ENCODE measurements at regions of chr6 and their contacts with region 1.

Region 1: GRCh38 chr6:47309291-47310130 is at the start of gene TNFRSF21:
- DNase-seq: peak; percentile 95
- H3K4me3 Mint-ChIP-seq: peak within 1 kb of the TSS; percentile 64
- H3K27ac Mint-ChIP-seq: peak within 1 kb of the TSS; percentile 58
- H3K4me1 Mint-ChIP-seq: peaks cover 9% of the 10 kb centered on the region
- H3K27me3 Mint-ChIP-seq: peaks cover 56% of the 10 kb centered on the region
- total RNA-seq, gene TNFRSF21: 3.8 and 4.2 TPM in 2 replicates

Region 2: GRCh38 chr6:46848684-46849360 is 460.7 kb before region 1 on chr6:
- intact Hi-C with region 1: loop called (anchors 1 kb)
- DNase-seq: peak; percentile 90
- H3K4me3 Mint-ChIP-seq: peak overlapping the region; percentile 72
- H3K27ac Mint-ChIP-seq: no peak overlapping the region
- H3K4me1 Mint-ChIP-seq: peaks cover 5% of the 10 kb centered on the region
- H3K27me3 Mint-ChIP-seq: peaks cover 20% of the 10 kb centered on the region

Region 3: GRCh38 chr6:47047479-47048407 is 261.8 kb before region 1 on chr6:
- intact Hi-C with region 1: loop called (anchors 5 kb)
- DNase-seq: peak; percentile 76
- H3K4me3 Mint-ChIP-seq: no peak overlapping the region
- H3K27ac Mint-ChIP-seq: no peak overlapping the region
- H3K4me1 Mint-ChIP-seq: no peaks in the 10 kb centered on the region
- H3K27me3 Mint-ChIP-seq: peaks cover 10% of the 10 kb centered on the region

Region 4: DNA sequence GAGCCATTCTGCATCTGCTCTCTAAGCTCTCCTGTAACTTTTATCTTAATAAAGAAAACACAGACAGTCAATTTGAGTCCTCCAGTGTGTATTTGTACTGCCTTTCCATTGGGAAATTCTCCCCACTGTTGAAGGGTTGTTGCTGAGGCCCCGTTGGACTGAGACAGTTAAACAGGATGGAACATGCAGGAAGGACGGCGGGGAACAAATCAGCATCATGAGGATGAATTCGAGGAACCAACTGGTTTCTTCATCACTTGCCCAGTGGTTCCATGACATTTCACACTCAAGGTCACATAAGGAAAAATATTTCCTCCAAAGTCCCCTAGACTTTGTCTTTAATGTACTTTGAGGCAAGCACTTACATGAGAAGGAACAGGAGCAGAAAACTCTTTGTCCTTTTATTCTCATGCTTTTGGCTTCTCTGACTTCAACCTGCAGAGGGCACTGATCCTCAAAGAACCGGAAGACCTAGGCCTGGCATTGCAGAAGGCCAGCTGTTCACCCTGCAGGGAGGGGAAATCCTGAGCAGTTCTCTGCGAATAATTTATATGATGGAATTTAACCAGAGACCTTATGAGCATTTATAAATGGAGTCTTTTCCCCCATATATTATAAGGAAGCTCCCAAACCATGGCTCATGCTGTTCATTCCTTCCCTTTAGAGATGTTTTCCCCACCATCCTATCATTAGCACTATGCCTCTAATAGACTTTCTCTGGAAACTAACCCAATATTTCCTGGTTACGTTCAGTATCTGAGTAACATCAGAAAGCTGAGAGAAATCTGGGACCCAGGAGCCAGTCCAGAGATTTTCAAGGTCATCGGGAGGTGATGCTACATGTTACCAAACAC is 212.2 kb before region 1 on chr6:
- intact Hi-C with region 1: loop called (anchors 1 kb)
- DNase-seq: peak; percentile 78
- H3K4me3 Mint-ChIP-seq: no peak overlapping the region
- H3K27ac Mint-ChIP-seq: no peak overlapping the region
- H3K4me1 Mint-ChIP-seq: no peaks in the 10 kb centered on the region
- H3K27me3 Mint-ChIP-seq: no peaks in the 10 kb centered on the region

Region 5: GRCh38 chr6:47288267-47289090 is 21.0 kb before region 1 on chr6:
- intact Hi-C with region 1: no loop called
- DNase-seq: no peak
- H3K4me3 Mint-ChIP-seq: no peak overlapping the region
- H3K27ac Mint-ChIP-seq: no peak overlapping the region
- H3K4me1 Mint-ChIP-seq: no peaks in the 10 kb centered on the region
- H3K27me3 Mint-ChIP-seq: no peaks in the 10 kb centered on the region

Measured in activated CD4-positive, alpha-beta T cell treated with anti-CD3 and anti-CD28 coated beads, Interleukin-2, amount 10 ng/mL, durations not matched to agents 24 days and 14 days (primary cell).